Calu3 (cell line): ENCODE measurements at regions of chr17 and their contacts with region 1.

Region 1: GRCh38 chr17:39636927-39637736 is at the start of gene STARD3:
- DNase-seq: no peak
- H3K4me3 Mint-ChIP-seq: peak within 1 kb of the TSS; percentile 71
- H3K27ac Mint-ChIP-seq: peak within 1 kb of the TSS; percentile 28
- H3K4me1 Mint-ChIP-seq: peaks cover 61% of the 10 kb centered on the region
- H3K27me3 Mint-ChIP-seq: peaks cover 5% of the 10 kb centered on the region
- CTCF ChIP-seq: no peak
- total RNA-seq, gene STARD3: 2,579 and 2,697 TPM in 2 replicates

Region 2: GRCh38 chr17:39462631-39463375 is 174.3 kb before region 1 on chr17:
- CTCF ChIA-PET with region 1: no interaction called
- intact Hi-C with region 1: no loop called
- DNase-seq: peak; percentile 59
- H3K4me3 Mint-ChIP-seq: peak overlapping the region; percentile 79
- H3K27ac Mint-ChIP-seq: peak overlapping the region; percentile 92
- H3K4me1 Mint-ChIP-seq: peaks cover 27% of the 10 kb centered on the region
- H3K27me3 Mint-ChIP-seq: no peaks in the 10 kb centered on the region
- CTCF ChIP-seq: peak; percentile 6

Region 3: DNA sequence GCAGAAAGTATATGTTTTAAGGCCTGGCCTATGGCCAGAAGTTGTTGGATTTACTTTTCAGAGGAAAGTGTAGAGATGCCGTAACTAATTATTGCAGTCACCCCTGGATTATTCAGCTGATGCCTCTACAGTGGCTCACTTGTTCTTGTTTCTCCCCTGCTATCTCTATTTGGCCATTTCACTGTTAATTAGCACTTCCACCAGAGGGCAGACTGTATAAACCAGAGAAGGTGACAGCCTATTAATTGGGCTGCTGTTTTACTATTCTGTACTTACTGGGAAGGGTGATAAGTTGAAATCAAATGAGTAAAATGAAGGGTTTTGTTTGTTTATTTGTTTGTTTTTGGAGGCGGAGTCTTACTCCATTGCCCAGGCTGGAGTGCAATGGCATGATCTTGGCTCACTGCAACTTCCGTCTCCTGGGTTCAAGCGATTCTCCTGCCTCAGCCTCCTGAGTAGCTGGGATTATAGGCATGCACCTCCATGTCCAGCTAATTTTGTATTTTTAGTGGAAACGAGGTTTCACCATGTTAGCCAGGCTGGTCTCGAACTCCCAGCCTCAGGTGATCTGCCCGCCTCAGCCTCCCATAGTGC is 109.8 kb before region 1 on chr17:
- CTCF ChIA-PET with region 1: no interaction called
- intact Hi-C with region 1: no loop called
- DNase-seq: peak; percentile 72
- H3K4me3 Mint-ChIP-seq: no peak overlapping the region
- H3K27ac Mint-ChIP-seq: no peak overlapping the region
- H3K4me1 Mint-ChIP-seq: no peaks in the 10 kb centered on the region
- H3K27me3 Mint-ChIP-seq: no peaks in the 10 kb centered on the region
- CTCF ChIP-seq: peak; percentile 97

Region 4: GRCh38 chr17:39668199-39668966 is 31.3 kb after region 1 on chr17 and contains the start of gene PNMT:
- CTCF ChIA-PET with region 1: interaction called, 42,089 read pairs
- intact Hi-C with region 1: loop called (anchors 1 kb)
- DNase-seq: peak; percentile 100
- H3K4me3 Mint-ChIP-seq: peak within 1 kb of the TSS; percentile 24
- H3K27ac Mint-ChIP-seq: peak within 1 kb of the TSS; percentile 0
- H3K4me1 Mint-ChIP-seq: peaks cover 65% of the 10 kb centered on the region
- H3K27me3 Mint-ChIP-seq: peaks cover 69% of the 10 kb centered on the region
- CTCF ChIP-seq: no peak
- total RNA-seq, gene PNMT: 1.3 and 3.2 TPM in 2 replicates

Region 5: DNA sequence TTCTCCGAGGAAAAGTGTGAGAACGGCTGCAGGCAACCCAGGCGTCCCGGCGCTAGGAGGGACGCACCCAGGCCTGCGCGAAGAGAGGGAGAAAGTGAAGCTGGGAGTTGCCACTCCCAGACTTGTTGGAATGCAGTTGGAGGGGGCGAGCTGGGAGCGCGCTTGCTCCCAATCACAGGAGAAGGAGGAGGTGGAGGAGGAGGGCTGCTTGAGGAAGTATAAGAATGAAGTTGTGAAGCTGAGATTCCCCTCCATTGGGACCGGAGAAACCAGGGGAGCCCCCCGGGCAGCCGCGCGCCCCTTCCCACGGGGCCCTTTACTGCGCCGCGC is 62.7 kb after region 1 on chr17 and contains the start of gene ERBB2:
- CTCF ChIA-PET with region 1: interaction called, 42,089 read pairs
- intact Hi-C with region 1: loop called (anchors 2 kb)
- DNase-seq: peak; percentile 100
- H3K4me3 Mint-ChIP-seq: peak within 1 kb of the TSS; percentile 71
- H3K27ac Mint-ChIP-seq: peak within 1 kb of the TSS; percentile 67
- H3K4me1 Mint-ChIP-seq: peaks cover 68% of the 10 kb centered on the region
- H3K27me3 Mint-ChIP-seq: no peaks in the 10 kb centered on the region
- CTCF ChIP-seq: no peak
- total RNA-seq, gene ERBB2: 4,829 and 4,830 TPM in 2 replicates

Region 6: DNA sequence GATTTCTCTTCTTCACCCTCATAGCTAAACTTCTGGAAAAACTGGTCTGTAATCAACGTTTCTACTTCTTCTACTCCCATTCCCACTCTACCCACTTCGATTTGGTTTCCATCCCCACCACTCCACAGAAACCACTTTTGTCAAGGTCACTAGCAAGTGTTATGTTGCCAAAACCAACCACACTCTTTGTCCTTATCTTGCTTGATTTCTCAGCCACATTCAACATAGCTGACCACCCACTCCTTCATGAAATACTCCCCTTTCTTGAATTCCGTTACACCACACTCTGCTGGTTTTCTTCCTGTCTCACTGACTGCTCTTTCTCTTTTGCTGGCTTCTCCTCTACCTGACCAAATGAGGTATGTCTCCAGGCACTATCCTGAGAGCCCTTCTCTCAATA is 215.1 kb after region 1 on chr17:
- CTCF ChIA-PET with region 1: interaction called, 92 read pairs
- intact Hi-C with region 1: no loop called
- DNase-seq: peak; percentile 59
- H3K4me3 Mint-ChIP-seq: no peak overlapping the region
- H3K27ac Mint-ChIP-seq: no peak overlapping the region
- H3K4me1 Mint-ChIP-seq: peaks cover 10% of the 10 kb centered on the region
- H3K27me3 Mint-ChIP-seq: no peaks in the 10 kb centered on the region
- CTCF ChIP-seq: no peak

Region 7: GRCh38 chr17:39946551-39947330 is 309.6 kb after region 1 on chr17:
- CTCF ChIA-PET with region 1: interaction called, 5,681 read pairs
- intact Hi-C with region 1: loop called (anchors 2 kb)
- DNase-seq: peak; percentile 86
- H3K4me3 Mint-ChIP-seq: no peak overlapping the region
- H3K27ac Mint-ChIP-seq: no peak overlapping the region
- H3K4me1 Mint-ChIP-seq: peaks cover 39% of the 10 kb centered on the region
- H3K27me3 Mint-ChIP-seq: peaks cover 57% of the 10 kb centered on the region
- CTCF ChIP-seq: no peak

Region 8: DNA sequence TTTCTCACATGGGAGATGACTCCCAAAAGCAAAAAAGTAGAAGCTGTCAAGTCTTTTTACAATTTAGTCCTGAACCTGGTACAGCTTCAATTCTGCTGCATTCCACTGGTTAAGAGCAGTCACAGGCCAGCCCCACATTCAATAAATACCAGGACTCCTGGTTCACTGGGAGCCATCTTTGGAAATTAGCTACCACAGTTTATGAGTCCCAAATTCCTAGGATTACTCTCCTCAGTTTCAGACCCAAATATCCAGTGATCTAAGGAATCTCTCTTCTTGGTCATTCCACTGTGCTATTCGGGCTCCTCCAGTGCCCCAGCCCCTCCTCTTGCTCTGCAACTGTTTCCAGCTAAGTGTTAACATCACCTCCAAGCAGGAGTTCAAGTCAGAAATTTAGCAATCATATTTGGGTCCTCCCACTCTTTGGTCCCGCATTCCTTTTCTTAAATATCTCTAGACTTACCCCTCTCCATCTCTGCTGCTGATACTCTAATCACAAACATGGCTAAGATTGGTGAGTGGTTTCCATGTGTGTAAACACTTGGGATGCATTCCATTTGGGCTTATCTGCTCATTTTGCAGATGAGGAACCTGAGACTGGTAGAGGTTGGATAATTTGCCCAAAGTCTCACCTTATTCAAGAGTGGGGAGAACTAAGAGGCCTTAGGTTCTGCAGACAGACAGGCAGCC is 572.4 kb after region 1 on chr17:
- CTCF ChIA-PET with region 1: no interaction called
- intact Hi-C with region 1: no loop called
- DNase-seq: no peak
- H3K4me3 Mint-ChIP-seq: no peak overlapping the region
- H3K27ac Mint-ChIP-seq: no peak overlapping the region
- H3K4me1 Mint-ChIP-seq: no peaks in the 10 kb centered on the region
- H3K27me3 Mint-ChIP-seq: no peaks in the 10 kb centered on the region
- CTCF ChIP-seq: no peak